HepG2 (cell line): ENCODE measurements at regions of chr3 and their contacts with region 1.

Region 1: DNA sequence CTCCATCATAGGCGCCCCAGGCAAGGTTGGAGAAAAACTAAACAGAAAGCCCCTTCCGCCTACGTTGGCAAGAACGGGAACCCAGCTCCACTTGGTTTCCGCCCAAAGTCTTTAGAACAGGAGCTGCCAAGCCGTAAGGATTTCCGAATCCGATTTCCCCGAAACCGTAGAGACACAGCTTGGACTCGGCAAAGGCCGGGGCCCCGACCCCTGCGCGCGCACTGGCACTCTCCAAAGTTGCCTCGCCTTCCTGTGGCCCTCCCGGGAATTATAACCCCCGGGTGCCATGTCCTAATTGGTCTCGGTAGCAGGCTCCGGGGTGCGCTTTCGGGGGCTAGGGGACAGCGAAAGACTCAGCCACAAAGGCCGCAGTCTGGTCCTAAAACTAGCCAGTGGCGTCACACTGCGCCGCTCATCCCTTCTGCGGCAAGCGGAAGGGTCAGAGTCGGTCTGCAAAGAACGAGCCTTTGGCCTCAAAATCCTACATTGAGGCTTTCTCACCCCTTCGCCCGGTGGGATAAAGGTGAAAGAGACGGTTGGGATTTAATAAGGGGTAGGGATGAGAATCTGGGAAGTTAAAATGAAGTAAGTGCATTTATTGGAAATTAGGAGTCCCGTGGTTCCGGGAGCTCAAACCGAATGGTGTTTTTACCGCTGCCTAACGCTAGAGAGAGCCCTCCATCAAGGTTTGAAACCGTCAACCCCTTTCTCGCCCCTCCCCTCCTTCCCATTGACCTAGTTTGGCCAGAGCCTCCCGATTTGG is 6.8 kb downstream of the BCL6 start:
- DNase-seq: peak; percentile 72
- ATAC-seq: peak; percentile 33
- H3K4me3 ChIP-seq: peak overlapping the region; percentile 45 to 99 (median 98)
- H3K27ac ChIP-seq: peak overlapping the region; percentile 100
- H3K4me1 ChIP-seq: peaks cover 57% of the 10 kb centered on the region
- H3K27me3 ChIP-seq: no peaks in the 10 kb centered on the region
- CTCF ChIP-seq: peak; percentile 72
- EP300 ChIP-seq: no peak
- POLR2A ChIP-seq: no peak
- RAD21 ChIP-seq: peak; percentile 70

Region 2: DNA sequence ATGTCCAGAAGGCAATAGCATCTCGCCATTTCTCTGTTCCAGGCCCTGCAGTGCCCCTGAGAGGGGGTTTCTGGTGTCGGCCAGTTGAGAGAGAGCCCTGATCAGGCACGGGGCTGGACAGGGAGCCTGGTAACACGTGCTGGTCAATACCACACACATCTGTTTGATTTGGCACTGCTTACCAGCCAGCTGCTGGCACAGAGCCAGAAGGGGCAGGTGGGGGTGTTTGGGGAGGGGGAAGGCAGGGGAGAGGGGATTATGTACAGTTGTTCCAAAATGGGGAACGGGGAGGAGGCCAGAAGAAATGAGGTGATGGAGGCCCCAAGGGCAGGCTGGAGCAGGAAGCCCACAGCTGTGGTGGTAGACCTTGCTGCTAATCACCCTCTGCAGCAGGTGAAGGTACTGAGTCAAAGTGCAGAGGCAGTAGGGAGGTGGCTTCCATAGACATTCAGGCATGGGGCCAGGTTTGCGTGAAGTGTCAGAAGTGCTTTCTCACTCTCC is 261.9 kb after region 1 on chr3:
- CTCF ChIA-PET with region 1: no interaction called
- POLR2A ChIA-PET with region 1: interaction called, 18 read pairs
- in situ Hi-C with region 1: loop called (anchors 10 kb)
- intact Hi-C with region 1: no loop called
- DNase-seq: no peak
- ATAC-seq: peak; percentile 17
- H3K4me3 ChIP-seq: no peak overlapping the region
- H3K27ac ChIP-seq: peak overlapping the region; percentile 90
- H3K4me1 ChIP-seq: peaks cover 99% of the 10 kb centered on the region
- H3K27me3 ChIP-seq: no peaks in the 10 kb centered on the region
- CTCF ChIP-seq: peak; percentile 32; the same call in 1 of the 2 replicates
- EP300 ChIP-seq: peak in 1 of 2 experiments; percentile 53; a peak in 1 of 4 replicates
- POLR2A ChIP-seq: no peak
- RAD21 ChIP-seq: no peak

Region 3: DNA sequence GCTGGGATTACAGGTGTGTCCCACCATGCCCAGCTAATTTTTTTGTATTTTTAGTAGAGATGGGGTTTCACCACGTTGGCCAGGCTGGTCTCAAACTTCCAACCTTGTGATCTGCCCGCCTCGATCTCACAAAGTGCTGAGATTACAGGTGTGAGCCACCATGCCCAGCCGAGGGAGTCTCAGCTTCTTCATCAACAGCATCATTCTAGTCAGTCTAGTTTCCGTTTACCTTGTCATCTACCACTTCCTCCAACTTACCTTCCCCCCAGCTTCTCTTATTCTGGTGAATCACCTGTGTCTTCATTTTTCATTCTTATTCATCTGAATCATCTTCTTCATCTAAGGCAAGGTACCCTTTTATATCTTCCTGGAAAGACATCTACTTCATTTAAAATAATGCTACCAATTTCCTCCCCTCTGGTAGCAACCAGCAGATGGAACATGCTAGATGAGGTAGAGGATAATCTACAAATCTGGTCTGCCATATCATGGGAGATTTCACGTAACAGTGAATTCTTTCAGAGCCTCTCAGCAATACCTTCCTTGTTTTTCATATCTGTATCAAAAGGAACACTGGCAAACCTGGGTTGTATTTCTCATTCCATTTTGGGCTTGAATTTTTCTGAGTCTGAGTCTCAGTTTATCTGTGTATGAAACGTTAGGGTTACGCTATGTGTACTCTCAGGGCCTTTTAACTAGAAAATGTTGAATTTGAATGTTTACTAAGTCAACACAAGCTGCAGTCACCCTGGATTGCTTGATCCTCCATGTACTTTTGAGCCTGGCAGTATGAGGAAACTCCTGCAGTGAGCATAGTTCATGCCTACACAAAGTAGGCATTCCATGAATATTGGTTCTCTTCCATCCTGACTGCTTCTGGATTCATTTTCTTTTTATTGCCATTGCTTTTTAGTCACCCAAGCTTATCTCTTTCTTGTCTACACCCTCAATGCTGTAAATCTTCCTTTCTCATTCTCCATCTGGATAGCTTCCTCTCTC is 432.2 kb after region 1 on chr3:
- CTCF ChIA-PET with region 1: no interaction called
- POLR2A ChIA-PET with region 1: no interaction called
- in situ Hi-C with region 1: no loop called
- intact Hi-C with region 1: loop called (anchors 5 kb)
- DNase-seq: peak; percentile 98
- ATAC-seq: peak; percentile 98
- H3K4me3 ChIP-seq: peak overlapping the region in 2 of 3 experiments; percentile 19 to 36; a peak in 3 of 6 replicates
- H3K27ac ChIP-seq: peak overlapping the region; percentile 83
- H3K4me1 ChIP-seq: peaks cover 96% of the 10 kb centered on the region
- H3K27me3 ChIP-seq: no peaks in the 10 kb centered on the region
- CTCF ChIP-seq: no peak
- EP300 ChIP-seq: peak; percentile 77 to 98; a peak in 3 of 4 replicates
- POLR2A ChIP-seq: no peak
- RAD21 ChIP-seq: no peak

Region 4: DNA sequence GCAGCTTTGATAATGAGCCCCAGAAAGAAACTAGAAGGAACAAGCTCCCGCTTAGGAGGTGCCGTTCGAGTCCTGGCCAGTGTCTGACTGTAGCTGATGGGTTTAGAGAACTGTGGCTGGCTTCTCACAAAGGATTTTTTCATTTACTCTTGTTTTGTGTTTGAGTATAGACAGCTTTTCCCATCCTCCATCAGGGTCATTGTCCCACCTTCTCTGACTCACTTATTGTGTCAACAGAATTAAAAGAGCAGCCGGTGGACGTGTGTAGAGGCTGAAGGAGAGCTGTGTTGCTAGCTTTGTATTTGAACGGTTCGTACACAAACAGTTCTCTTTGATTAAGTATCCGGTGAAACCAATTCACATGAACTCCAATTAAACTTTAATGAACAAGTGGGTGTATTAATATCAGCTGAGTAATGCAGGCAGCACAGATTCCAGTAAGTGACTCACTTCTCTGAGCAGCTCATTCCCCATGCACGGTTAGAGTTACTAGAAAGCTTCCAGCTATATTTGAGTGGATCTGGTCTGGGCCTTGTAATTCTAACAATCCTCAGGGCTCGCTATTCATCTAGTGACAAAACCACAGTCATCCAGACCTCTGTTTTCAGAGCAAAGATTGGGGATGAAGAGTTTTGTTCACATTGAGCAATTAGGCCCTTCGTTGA is 556.4 kb after region 1 on chr3:
- CTCF ChIA-PET with region 1: no interaction called
- POLR2A ChIA-PET with region 1: interaction called, 15 read pairs
- in situ Hi-C with region 1: loop called (anchors 10 kb)
- intact Hi-C with region 1: loop called (anchors 2 kb)
- DNase-seq: peak; percentile 99
- ATAC-seq: peak; percentile 90
- H3K4me3 ChIP-seq: peak overlapping the region in 1 of 3 experiments; percentile 45; a peak in 2 of 6 replicates
- H3K27ac ChIP-seq: peak overlapping the region; percentile 94
- H3K4me1 ChIP-seq: peaks cover 99% of the 10 kb centered on the region
- H3K27me3 ChIP-seq: no peaks in the 10 kb centered on the region
- CTCF ChIP-seq: no peak
- EP300 ChIP-seq: peak; percentile 90 to 96; a peak in 3 of 4 replicates
- POLR2A ChIP-seq: peak; percentile 48 to 74; a peak in 3 of 4 replicates
- RAD21 ChIP-seq: peak; percentile 37; the same call in 1 of the 2 replicates

Region 5: GRCh38 chr3:188839187-188839695 is 1100.7 kb after region 1 on chr3:
- CTCF ChIA-PET with region 1: no interaction called
- POLR2A ChIA-PET with region 1: no interaction called
- in situ Hi-C with region 1: no loop called
- intact Hi-C with region 1: loop called (anchors 5 kb)
- DNase-seq: peak; percentile 98
- ATAC-seq: peak; percentile 100
- H3K4me3 ChIP-seq: peak overlapping the region in 1 of 3 experiments; percentile 12; a peak in 1 of 6 replicates
- H3K27ac ChIP-seq: peak overlapping the region; percentile 60
- H3K4me1 ChIP-seq: peaks cover 26% of the 10 kb centered on the region
- H3K27me3 ChIP-seq: no peaks in the 10 kb centered on the region
- CTCF ChIP-seq: no peak
- EP300 ChIP-seq: peak; percentile 85 to 98
- POLR2A ChIP-seq: no peak
- RAD21 ChIP-seq: no peak

Region 6: DNA sequence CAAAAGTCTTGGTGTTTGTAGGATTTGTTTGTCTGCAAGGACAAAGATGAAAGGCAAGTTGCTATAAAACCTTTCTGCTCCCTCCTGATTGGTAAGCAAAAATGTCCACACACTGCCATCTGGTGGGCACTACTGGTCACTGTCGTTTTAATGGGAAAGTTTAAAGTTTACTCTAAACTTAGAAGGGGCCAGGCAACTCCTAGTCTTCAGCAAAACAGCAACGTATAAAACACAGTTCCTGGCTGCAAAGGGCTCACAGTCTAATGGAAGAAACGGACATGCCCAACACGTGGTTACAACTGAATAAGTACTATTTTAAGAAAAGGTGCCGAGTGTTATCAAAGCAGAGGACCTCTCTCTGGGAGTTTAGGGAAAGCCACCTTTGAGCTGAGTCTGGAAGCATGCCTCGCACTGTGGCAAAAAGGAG is 1409.6 kb after region 1 on chr3:
- CTCF ChIA-PET with region 1: interaction called, 3 read pairs
- POLR2A ChIA-PET with region 1: no interaction called
- in situ Hi-C with region 1: loop called (anchors 10 kb)
- intact Hi-C with region 1: loop called (anchors 2 kb)
- DNase-seq: peak; percentile 52
- ATAC-seq: peak; percentile 94
- H3K4me3 ChIP-seq: no peak overlapping the region
- H3K27ac ChIP-seq: no peak overlapping the region
- H3K4me1 ChIP-seq: peaks cover 10% of the 10 kb centered on the region
- H3K27me3 ChIP-seq: no peaks in the 10 kb centered on the region; a peak in 2 of 5 replicates
- CTCF ChIP-seq: peak; percentile 84
- EP300 ChIP-seq: no peak
- POLR2A ChIP-seq: no peak
- RAD21 ChIP-seq: peak; percentile 25; the same call in 1 of the 2 replicates